PC-9 (cell line): ENCODE measurements at regions of chr11 and their contacts with region 1.

Region 1: DNA sequence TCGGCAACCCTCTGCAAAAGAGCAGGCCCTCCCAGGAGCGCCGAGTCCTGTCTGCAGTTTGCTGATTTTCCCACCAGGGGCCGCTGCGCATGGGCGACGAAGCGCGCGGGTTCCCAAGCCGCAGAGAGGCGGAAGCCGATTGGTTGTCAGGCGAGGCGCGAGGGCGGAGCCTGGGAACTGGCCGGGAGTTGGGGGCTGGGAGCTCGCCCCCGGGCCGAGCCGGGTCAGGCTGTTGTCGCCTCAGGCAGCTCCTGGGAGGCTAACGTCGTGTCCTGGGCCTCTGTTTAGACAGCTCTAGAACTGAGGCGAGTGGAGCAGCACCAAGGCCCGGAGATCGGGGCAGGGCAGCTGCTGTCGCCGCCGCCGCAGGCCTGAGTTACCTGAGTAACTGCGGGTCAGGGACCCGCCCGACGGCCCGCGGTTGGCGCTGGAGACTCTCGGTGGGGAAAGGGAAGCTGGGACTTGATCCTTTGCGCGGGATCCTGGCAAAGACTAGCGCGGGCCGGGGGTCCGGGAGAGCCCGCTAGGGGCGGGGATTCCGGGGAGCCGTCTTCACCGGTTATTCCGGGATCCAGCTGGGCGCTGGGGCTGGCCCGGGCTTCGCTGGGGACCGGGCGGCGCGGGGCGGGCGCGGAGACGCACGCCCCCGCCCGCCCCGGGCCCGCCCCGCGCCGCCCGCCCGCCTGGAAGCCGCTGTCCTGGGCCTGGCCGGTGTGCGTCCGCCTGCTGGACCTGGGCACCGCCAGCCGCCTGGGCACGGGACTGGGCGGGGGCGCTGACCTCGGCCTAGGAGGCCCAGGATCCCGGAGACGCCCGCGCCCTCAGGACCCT is at the start of gene STIM1:
- DNase-seq: peak; percentile 71 to 92
- H3K4me3 ChIP-seq: peak within 1 kb of the TSS; percentile 82
- H3K27ac ChIP-seq: peak within 1 kb of the TSS; percentile 76
- H3K4me1 ChIP-seq: peaks cover 41% of the 10 kb centered on the region
- H3K27me3 ChIP-seq: no peaks in the 10 kb centered on the region
- CTCF ChIP-seq: peak; percentile 86
- total RNA-seq, gene STIM1: 26.8 and 28.3 TPM in 2 replicates

Region 2: DNA sequence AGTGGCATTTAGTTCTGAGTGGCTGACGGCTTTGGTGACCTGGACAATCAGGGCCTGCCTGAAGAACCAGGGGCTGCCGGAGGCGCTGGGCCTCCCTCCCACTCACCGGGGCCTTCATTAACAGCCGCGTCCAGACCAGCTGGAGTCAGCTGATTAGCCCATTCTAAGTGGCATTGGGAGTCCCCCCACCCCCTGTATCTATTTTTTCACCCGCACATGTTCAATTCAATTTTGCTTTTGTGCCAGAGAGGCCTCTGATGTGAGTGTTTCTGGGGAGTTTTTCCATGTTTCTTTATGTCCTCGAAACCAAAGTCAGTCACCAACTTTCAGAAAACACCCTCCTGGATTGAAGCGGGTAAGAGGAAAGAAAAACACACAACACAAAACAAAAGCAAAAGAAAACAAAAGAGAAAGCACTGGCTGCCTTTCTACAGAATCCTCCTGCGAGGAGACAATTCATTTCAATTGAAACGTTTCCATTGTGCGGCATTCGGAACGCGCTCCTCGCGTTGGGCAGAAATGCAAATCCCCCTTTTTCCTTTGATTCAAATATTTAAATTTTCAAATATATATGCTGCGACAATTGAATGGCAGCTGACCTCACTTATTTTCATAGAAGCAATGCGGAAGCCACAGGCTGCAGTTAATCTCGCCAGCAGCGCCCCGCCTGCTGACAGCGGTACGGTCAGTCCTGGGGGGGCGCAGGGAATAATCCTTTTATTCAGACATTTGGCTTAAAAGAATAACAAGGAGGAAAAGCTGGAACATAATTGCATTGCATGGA is 987.3 kb before region 1 on chr11:
- CTCF ChIA-PET with region 1: interaction called, 11 read pairs
- POLR2A ChIA-PET with region 1: no interaction called
- intact Hi-C with region 1: no loop called
- DNase-seq: no peak
- H3K4me3 ChIP-seq: no peak overlapping the region
- H3K27ac ChIP-seq: no peak overlapping the region
- H3K4me1 ChIP-seq: no peaks in the 10 kb centered on the region
- H3K27me3 ChIP-seq: no peaks in the 10 kb centered on the region
- CTCF ChIP-seq: no peak

Region 3: DNA sequence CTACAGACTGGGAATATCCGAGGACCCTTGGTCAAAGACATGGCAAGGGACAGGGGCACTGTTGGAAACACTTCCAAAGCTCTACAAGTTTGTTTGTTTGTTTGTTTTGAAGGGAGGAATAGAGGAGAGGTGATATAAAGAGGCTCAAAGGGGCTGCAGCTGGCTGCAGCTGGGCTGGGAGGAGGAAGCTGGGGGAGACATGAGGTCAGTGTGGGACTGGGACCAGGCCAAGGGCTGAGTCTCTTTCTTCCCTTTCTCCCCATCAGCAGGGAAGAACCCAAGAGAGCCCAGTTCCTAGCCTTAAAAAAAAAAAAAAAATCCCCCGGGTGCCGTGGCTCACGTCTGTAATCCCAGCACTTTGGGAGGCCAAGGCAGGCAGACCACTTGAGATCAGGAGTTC is 19.4 kb before region 1 on chr11:
- CTCF ChIA-PET with region 1: interaction called, 10 read pairs
- POLR2A ChIA-PET with region 1: no interaction called
- intact Hi-C with region 1: no loop called
- DNase-seq: no peak
- H3K4me3 ChIP-seq: no peak overlapping the region
- H3K27ac ChIP-seq: no peak overlapping the region
- H3K4me1 ChIP-seq: 0 out of 2 replicates have a peak, but pooled peaks cover 3% of the 10 kb centered on the region
- H3K27me3 ChIP-seq: no peaks in the 10 kb centered on the region
- CTCF ChIP-seq: no peak

Region 4: DNA sequence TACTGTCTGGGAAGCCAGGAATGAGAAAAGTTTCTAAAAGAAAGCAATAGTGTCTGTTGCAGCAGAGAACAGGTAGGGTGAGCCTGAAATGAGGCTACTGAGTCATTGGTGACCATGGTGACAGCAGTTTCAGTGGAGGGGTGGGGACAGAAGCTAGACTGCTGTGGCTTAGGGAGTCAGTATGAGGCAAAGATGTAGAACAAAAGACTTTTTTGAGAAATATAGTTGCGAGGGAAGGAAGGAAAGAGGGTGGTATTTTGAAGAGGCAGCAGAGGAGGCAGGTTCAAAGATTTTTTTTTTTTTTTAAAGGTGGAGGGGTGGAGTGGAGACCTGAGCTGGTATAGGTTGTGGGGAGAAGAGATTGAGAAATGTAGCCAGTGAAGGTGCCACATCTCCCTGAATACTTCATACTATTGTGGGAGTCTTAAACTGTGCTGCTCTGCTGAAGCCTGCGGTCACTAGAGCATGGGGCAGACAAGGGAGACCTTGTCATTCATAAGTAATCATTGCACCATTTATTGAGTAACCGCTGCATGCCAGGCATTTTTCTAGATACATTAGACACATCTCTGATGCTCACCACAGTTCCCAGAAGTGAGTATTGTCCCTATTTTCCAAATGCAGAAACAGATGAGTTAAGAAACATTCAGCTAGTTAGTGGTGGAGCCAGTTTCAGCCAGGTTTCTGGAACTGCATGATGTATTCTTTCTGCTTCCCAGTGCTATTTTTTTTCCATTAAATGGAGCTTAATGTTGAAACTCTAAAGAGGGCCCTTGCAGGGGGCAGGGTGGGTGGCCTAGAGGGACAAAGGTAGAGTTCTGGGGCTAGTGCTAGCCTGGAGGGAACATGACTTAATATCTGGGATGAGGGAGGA is 50.1 kb after region 1 on chr11:
- CTCF ChIA-PET with region 1: interaction called, 6 read pairs
- POLR2A ChIA-PET with region 1: no interaction called
- intact Hi-C with region 1: loop called (anchors 2 kb)
- DNase-seq: peak; percentile 67 to 95
- H3K4me3 ChIP-seq: peak overlapping the region; percentile 54; the same call in 1 of the 2 replicates
- H3K27ac ChIP-seq: peak overlapping the region; percentile 100
- H3K4me1 ChIP-seq: peaks cover 78% of the 10 kb centered on the region
- H3K27me3 ChIP-seq: no peaks in the 10 kb centered on the region
- CTCF ChIP-seq: no peak

Region 5: DNA sequence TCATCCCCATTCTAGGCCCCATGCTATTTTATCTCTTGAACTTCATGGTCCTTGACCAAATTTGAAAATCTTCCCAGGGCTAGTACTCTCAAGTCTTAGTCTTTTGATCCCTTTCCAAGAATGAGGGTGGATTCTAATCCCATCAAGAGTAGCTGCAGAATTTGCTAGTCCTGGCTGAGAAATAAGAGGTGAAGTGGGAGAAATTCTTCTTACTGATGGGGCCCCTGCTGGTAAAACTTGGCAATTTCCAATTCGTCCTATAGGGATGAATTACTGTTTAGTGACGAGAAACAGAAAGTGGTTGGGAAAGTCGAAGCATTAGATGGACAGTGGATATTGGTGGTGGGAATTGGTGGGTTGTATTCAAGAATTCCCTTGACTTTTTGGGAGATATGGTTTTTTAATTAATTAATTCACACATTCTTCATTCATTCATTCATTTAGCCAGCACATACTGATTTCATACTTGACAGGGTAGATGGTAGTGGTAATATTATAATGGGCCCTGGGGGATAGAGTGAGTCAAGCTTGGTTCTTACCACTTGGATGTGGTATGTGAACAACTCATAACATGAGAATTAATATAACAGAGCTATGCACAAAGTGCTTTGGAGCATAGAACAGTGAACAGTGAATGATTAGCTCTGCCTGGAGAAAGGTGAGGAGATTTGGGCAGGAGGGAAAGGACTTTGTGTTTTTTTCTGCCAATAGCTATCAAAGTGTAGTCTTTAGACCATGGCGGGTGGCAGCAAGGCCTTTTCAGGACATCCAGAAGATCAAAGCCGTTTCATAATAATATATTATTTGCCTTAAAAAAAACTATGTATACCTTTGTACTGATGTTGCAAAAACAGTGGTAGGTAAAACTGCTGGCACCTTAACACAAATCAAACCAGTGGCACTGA is 104.1 kb after region 1 on chr11:
- CTCF ChIA-PET with region 1: interaction called, 3 read pairs
- POLR2A ChIA-PET with region 1: no interaction called
- intact Hi-C with region 1: loop called (anchors 5 kb)
- DNase-seq: no peak
- H3K4me3 ChIP-seq: no peak overlapping the region
- H3K27ac ChIP-seq: peak overlapping the region; percentile 12; the same call in 1 of the 2 replicates
- H3K4me1 ChIP-seq: peaks cover 18% of the 10 kb centered on the region
- H3K27me3 ChIP-seq: no peaks in the 10 kb centered on the region
- CTCF ChIP-seq: 0 out of 2 replicates have a peak, but pooled peaks have one; percentile 15

Region 6: GRCh38 chr11:4039011-4039410 is 183.8 kb after region 1 on chr11:
- CTCF ChIA-PET with region 1: no interaction called
- POLR2A ChIA-PET with region 1: interaction called, 11 read pairs
- intact Hi-C with region 1: no loop called
- DNase-seq: no peak
- H3K4me3 ChIP-seq: no peak overlapping the region
- H3K27ac ChIP-seq: no peak overlapping the region
- H3K4me1 ChIP-seq: no peaks in the 10 kb centered on the region
- H3K27me3 ChIP-seq: no peaks in the 10 kb centered on the region
- CTCF ChIP-seq: no peak

Region 7: GRCh38 chr11:4072668-4073285 is 217.6 kb after region 1 on chr11:
- CTCF ChIA-PET with region 1: interaction called, 19 read pairs
- POLR2A ChIA-PET with region 1: no interaction called
- intact Hi-C with region 1: loop called (anchors 1 kb)
- DNase-seq: peak; percentile 20 to 43
- H3K4me3 ChIP-seq: no peak overlapping the region
- H3K27ac ChIP-seq: no peak overlapping the region
- H3K4me1 ChIP-seq: no peaks in the 10 kb centered on the region
- H3K27me3 ChIP-seq: no peaks in the 10 kb centered on the region
- CTCF ChIP-seq: peak; percentile 76